Activated CD4-positive, alpha-beta T cell treated with anti-CD3 and anti-CD28 coated beads for 36 hours (primary cell): ENCODE measurements at regions of chr3 and their contacts with region 1.

Region 1: GRCh38 chr3:108221911-108222852 is at the start of gene IFT57:
- DNase-seq: peak; percentile 96
- ATAC-seq: peak; percentile 92
- H3K4me3 Mint-ChIP-seq: peak within 1 kb of the TSS; percentile 99
- H3K27ac Mint-ChIP-seq: peak within 1 kb of the TSS; percentile 99
- H3K4me1 Mint-ChIP-seq: peaks cover 47% of the 10 kb centered on the region
- H3K27me3 Mint-ChIP-seq: no peaks in the 10 kb centered on the region
- total RNA-seq, gene IFT57: 27.9 to 29.6 TPM

Region 2: GRCh38 chr3:107476462-107476861 is 745.7 kb before region 1 on chr3:
- CTCF ChIA-PET with region 1: no interaction called
- POLR2A ChIA-PET with region 1: no interaction called
- intact Hi-C with region 1: no loop called
- DNase-seq: no peak
- ATAC-seq: no peak
- H3K4me3 Mint-ChIP-seq: no peak overlapping the region
- H3K27ac Mint-ChIP-seq: no peak overlapping the region
- H3K4me1 Mint-ChIP-seq: no peaks in the 10 kb centered on the region
- H3K27me3 Mint-ChIP-seq: peaks cover 5% of the 10 kb centered on the region

Region 3: DNA sequence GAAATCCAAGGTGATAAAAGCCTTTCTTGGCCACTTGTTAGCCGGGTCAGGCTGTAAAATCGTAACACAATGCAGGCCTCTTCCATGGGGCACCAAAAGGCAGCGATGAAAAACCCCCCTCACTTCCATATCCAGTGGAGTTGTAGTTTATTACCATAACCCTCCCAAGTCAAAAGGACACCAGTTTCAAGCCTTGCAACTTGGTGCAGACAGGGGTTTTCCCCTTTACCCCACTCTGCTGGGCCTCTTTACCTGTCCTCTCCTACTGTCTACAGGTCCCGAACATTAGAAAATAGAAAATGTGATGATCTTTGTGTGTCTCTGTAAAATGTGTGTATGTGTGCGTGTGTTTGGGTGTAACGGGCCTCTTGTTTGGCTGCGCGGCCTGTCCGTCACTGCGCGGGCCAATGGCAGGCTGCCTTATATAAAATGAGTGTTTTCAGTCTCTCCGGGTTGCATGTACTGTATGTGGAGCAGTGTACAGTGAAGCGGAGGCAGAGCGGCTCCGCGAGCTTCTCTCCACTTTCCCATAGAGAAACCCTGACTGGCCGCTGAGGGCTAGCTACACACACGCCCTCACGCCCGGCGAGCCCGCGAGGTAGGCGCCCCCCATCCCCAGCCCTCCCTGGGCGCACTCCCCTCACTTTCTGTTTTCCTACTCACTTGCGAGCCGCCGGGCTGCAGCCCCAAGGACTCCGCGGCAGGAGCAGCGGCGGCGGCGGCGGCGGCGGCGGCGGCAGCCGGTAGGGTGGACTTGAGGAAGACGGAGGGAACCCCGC is 699.5 kb before region 1 on chr3 and contains the start of gene BBX:
- CTCF ChIA-PET with region 1: no interaction called
- POLR2A ChIA-PET with region 1: interaction called, 3 read pairs
- intact Hi-C with region 1: loop called in 1 of 2 experiments (anchors 2 kb)
- DNase-seq: peak; percentile 91
- ATAC-seq: peak; percentile 93
- H3K4me3 Mint-ChIP-seq: peak within 1 kb of the TSS; percentile 97
- H3K27ac Mint-ChIP-seq: peak within 1 kb of the TSS; percentile 95
- H3K4me1 Mint-ChIP-seq: peaks cover 25% of the 10 kb centered on the region
- H3K27me3 Mint-ChIP-seq: no peaks in the 10 kb centered on the region
- total RNA-seq, gene BBX: 38.9 to 63.4 TPM

Region 4: DNA sequence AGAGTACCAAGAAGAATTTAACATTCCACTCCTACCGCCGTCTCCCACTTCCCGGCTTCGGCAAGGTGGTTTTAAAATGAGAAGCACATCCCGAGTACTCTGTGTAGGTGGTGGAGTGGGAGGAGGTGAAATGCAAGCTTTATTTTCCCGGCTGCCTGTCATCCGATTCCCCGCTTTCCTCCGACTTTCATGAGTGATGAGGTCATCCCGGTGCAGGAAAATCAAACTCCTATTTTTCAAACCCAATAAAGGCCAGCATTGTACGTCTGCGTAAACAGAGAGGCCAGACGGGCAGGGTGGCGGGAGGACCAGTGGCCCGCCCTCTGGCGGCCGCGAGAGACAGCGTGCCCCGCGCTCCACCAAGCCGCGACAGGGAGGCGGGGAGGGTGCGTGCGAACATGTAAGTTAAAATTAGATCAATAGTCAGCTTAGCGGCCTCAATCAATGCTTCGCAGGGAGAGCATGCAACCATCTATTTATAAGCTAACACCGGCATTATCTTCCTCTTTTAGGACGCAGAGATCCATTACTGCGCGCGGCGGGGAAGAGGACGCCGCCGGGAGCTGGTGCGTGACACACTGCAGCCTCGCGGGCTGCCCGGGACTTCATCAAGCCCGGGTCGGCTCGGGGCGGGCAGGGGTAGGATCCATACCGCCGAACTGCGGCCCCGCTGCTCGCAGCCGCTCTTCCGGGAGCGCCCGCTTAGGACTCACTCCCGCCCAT is 294.7 kb before region 1 on chr3:
- CTCF ChIA-PET with region 1: no interaction called
- POLR2A ChIA-PET with region 1: no interaction called
- intact Hi-C with region 1: loop called in 1 of 2 experiments (anchors 5 kb)
- DNase-seq: peak; percentile 86
- ATAC-seq: peak; percentile 92
- H3K4me3 Mint-ChIP-seq: peak overlapping the region; percentile 73
- H3K27ac Mint-ChIP-seq: peak overlapping the region; percentile 76
- H3K4me1 Mint-ChIP-seq: peaks cover 9% of the 10 kb centered on the region
- H3K27me3 Mint-ChIP-seq: peaks cover 4% of the 10 kb centered on the region

Region 5: GRCh38 chr3:108124337-108125152 is 97.6 kb before region 1 on chr3:
- CTCF ChIA-PET with region 1: interaction called, 5 read pairs
- POLR2A ChIA-PET with region 1: interaction called, 5 read pairs
- intact Hi-C with region 1: loop called (anchors 1 kb)
- DNase-seq: peak; percentile 82
- ATAC-seq: peak; percentile 70
- H3K4me3 Mint-ChIP-seq: peak overlapping the region; percentile 93
- H3K27ac Mint-ChIP-seq: peak overlapping the region; percentile 96
- H3K4me1 Mint-ChIP-seq: peaks cover 62% of the 10 kb centered on the region
- H3K27me3 Mint-ChIP-seq: no peaks in the 10 kb centered on the region

Region 6: DNA sequence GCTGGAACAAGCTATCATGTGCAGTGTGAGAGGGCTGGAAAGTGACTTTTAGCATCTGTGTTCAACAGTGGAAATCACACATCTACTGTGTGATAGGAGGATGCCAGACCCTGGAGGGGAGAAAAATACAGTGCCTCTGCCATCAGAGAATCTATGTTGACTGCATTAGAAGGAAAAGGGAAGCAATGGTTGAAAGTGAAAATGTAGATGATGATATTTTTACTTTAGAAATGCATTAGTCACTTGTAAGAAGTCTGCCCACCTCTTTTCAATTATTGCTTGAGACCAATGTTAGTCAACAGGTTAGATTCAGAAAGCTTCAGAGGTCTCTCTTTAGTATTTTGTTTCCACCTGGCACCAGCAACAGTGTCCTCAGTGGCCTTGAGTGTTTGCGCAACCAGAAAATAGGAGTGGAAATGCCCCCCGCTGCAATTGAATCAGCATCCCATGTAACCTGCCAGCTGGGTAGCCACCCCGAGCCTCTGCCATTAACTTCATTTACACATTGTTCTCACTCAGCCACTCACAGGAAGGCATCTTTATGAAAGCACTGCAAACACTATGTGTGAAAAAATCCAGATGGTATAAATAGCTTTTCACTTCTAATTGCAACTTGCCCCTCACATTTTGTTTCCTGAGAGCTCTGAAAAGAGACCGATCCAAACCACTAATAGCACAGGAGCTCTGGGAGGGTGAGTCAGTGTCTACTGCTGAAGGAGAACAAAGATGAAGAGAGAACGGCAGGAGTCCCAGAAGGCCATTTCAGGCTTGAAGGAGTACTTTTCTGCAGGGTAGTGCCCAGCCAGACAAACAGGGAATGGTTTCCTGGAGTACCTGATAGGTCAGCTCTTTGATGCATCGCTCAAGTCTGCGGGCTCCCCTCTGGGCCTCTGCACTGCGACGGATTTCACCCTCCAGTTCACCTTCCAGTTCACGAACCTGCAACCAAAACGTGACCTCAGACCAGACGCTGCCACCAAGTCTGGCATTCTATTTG is 166.3 kb after region 1 on chr3:
- CTCF ChIA-PET with region 1: no interaction called
- POLR2A ChIA-PET with region 1: no interaction called
- intact Hi-C with region 1: loop called in 1 of 2 experiments (anchors 1 kb)
- DNase-seq: peak; percentile 29
- ATAC-seq: peak; percentile 90
- H3K4me3 Mint-ChIP-seq: no peak overlapping the region
- H3K27ac Mint-ChIP-seq: peak overlapping the region; percentile 8
- H3K4me1 Mint-ChIP-seq: peaks cover 25% of the 10 kb centered on the region
- H3K27me3 Mint-ChIP-seq: peaks cover 15% of the 10 kb centered on the region

Region 7: GRCh38 chr3:108589146-108589997 is 367.2 kb after region 1 on chr3 and contains the starts of genes CIP2A and DZIP3:
- CTCF ChIA-PET with region 1: no interaction called
- POLR2A ChIA-PET with region 1: no interaction called
- intact Hi-C with region 1: loop called in 1 of 2 experiments (anchors 1 kb)
- DNase-seq: peak; percentile 90
- ATAC-seq: peak; percentile 87
- H3K4me3 Mint-ChIP-seq: peak within 1 kb of the TSS; percentile 82
- H3K27ac Mint-ChIP-seq: peak within 1 kb of the TSS; percentile 97
- H3K4me1 Mint-ChIP-seq: peaks cover 33% of the 10 kb centered on the region
- H3K27me3 Mint-ChIP-seq: no peaks in the 10 kb centered on the region
- total RNA-seq, gene CIP2A: 47.8 to 58.5 TPM
- total RNA-seq, gene DZIP3: 11.9 to 12.9 TPM